ENCODE measurements at regions of chr1 and their contacts with region 1.

Region 1: DNA sequence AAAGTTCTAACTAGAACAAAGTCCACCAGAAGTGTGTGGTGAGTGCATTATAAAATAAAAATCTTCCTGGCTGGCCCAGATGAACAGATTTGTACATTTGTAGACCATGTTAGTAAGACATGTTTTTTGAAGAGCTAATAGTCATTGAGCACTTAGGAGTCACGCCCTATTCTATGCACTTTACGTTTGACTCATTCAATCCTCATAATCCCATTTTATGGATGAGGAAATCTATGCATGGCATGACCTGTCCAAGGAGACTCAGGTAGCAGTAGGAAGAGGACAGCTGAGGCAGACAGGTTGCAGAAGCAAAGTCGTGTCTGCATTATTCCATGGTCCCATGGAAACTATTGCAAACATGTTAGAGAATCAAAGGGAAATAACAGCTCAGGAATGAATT is 30.3 kb upstream of the LPAR3 start:
- DNase-seq: no peak
- H3K4me3 Mint-ChIP-seq: no peak overlapping the region
- H3K27ac Mint-ChIP-seq: no peak overlapping the region
- H3K4me1 Mint-ChIP-seq: no peaks in the 10 kb centered on the region
- H3K27me3 Mint-ChIP-seq: peaks cover 3% of the 10 kb centered on the region

Region 2: GRCh38 chr1:84936116-84936810 is 12.9 kb after region 1 on chr1:
- CTCF ChIA-PET with region 1: interaction called, 10 read pairs
- POLR2A ChIA-PET with region 1: no interaction called
- intact Hi-C with region 1: no loop called
- DNase-seq: peak; percentile 27
- H3K4me3 Mint-ChIP-seq: no peak overlapping the region
- H3K27ac Mint-ChIP-seq: no peak overlapping the region
- H3K4me1 Mint-ChIP-seq: peaks cover 4% of the 10 kb centered on the region
- H3K27me3 Mint-ChIP-seq: no peaks in the 10 kb centered on the region